A549 (cell line): ENCODE measurements at regions of chr3 and their contacts with region 1.

Region 1: DNA sequence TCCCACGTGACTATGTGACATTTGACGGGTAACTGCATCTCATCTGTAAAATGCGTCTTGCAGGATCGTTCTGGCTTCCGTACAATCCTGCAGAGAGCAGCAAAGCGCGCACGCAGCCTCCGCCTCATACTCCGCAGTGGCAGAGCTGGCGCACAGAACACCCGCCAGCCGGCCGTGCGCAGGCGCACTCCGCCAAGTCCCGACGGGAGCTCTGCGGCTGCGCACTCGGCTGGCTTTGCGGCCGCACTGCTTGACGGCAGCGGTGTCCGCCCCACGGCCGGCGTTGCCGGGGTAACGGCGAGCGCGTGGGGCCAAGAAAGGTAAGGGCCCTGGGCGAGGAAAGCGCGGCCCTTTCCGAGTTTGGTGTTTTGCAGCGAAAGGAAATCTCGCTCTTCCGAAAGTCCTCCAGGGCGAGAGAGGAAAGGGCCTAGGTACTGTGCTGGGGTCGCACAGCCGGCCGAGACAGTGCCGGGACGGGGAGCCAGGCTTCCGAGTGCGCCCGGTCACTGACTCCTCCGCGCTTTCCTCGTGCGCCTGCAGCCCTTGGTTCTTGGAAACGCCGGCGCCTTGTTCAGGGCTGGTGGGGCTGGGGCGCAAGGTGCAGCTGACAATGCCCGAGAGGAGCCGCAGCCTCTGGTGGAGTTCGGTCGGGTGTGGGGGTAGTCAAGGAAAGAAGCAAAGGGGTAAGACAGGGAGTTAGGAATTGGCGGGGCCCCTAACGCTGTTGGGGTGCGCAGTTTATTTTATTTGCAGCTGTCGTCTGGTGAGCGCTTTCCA is at the start of gene TSEN2:
- DNase-seq: peak; percentile 92 to 95
- ATAC-seq: peak; percentile 87 to 96
- H3K4me3 ChIP-seq: peak within 1 kb of the TSS; percentile 81
- H3K27ac ChIP-seq: peak within 1 kb of the TSS; percentile 88 to 93
- H3K4me1 ChIP-seq: peaks cover 25% of the 10 kb centered on the region
- CTCF ChIP-seq: no peak
- EP300 ChIP-seq: no peak
- POLR2A ChIP-seq: peak; percentile 95
- RAD21 ChIP-seq: peak in 1 of 2 experiments; percentile 22; a peak in 1 of 5 replicates
- polyA plus RNA-seq, gene TSEN2: 29.8 and 33.1 TPM in 2 replicates

Region 2: GRCh38 chr3:12175844-12176453 is 308.4 kb before region 1 on chr3:
- CTCF ChIA-PET with region 1: interaction called, 85 read pairs
- POLR2A ChIA-PET with region 1: interaction called, 3 read pairs
- DNase-seq: peak; percentile 58 to 60
- ATAC-seq: peak; percentile 96 to 98
- H3K4me3 ChIP-seq: no peak overlapping the region
- H3K27ac ChIP-seq: peak overlapping the region; percentile 33 to 51; a peak in 3 of 6 replicates
- H3K4me1 ChIP-seq: peaks cover 16% of the 10 kb centered on the region
- CTCF ChIP-seq: peak; percentile 85
- EP300 ChIP-seq: no peak
- POLR2A ChIP-seq: no peak
- RAD21 ChIP-seq: peak; percentile 94

Region 3: GRCh38 chr3:12224181-12225147 is 259.9 kb before region 1 on chr3:
- CTCF ChIA-PET with region 1: interaction called, 10 read pairs
- POLR2A ChIA-PET with region 1: no interaction called
- DNase-seq: peak in 1 of 2 experiments; percentile 3
- ATAC-seq: no peak
- H3K4me3 ChIP-seq: no peak overlapping the region
- H3K27ac ChIP-seq: 0 out of 6 replicates have a peak overlapping the region, but pooled peaks of 1 of the 2 experiments have one; percentile 30
- H3K4me1 ChIP-seq: peaks cover 23% of the 10 kb centered on the region
- CTCF ChIP-seq: no peak
- EP300 ChIP-seq: no peak
- POLR2A ChIP-seq: no peak
- RAD21 ChIP-seq: no peak

Region 4: DNA sequence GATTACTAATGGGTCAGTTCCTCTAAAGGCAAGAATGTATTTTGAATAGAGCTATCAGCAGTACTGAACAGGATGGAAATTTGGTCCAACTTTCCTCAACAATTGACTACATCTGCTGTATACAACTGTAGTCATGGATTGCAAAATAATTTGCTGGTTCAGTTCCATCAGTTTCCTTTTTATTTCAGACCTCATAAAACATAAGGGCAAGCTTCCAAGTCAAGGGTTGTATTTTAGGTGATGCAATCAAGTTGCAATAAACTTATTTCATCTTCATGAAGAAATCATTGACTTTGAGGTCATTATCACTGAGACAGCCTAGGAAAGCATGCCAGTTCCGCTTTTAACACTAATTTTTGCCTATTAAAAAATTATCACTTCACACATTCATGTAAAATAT is 90.5 kb before region 1 on chr3:
- CTCF ChIA-PET with region 1: interaction called, 13 read pairs
- POLR2A ChIA-PET with region 1: no interaction called
- DNase-seq: peak in 1 of 2 experiments; percentile 46
- ATAC-seq: peak in 1 of 2 experiments; percentile 24; a peak in 2 of 6 replicates
- H3K4me3 ChIP-seq: no peak overlapping the region
- H3K27ac ChIP-seq: peak overlapping the region; percentile 65 to 71; a peak in 5 of 6 replicates
- H3K4me1 ChIP-seq: peaks cover 27% of the 10 kb centered on the region
- CTCF ChIP-seq: no peak
- EP300 ChIP-seq: peak; percentile 68 to 76; a peak in 3 of 5 replicates
- POLR2A ChIP-seq: no peak
- RAD21 ChIP-seq: no peak; a peak in 1 of 5 replicates

Region 5: GRCh38 chr3:12465836-12466395 is 18.5 kb before region 1 on chr3:
- CTCF ChIA-PET with region 1: interaction called, 39 read pairs
- POLR2A ChIA-PET with region 1: interaction called, 4 read pairs
- DNase-seq: no peak
- ATAC-seq: no peak
- H3K4me3 ChIP-seq: no peak overlapping the region
- H3K27ac ChIP-seq: peak overlapping the region in 1 of 2 experiments; percentile 42; a peak in 1 of 6 replicates
- H3K4me1 ChIP-seq: peaks cover 12% of the 10 kb centered on the region
- CTCF ChIP-seq: no peak
- EP300 ChIP-seq: no peak
- POLR2A ChIP-seq: no peak
- RAD21 ChIP-seq: no peak

Region 6: GRCh38 chr3:12549971-12550760 is 65.8 kb after region 1 on chr3:
- CTCF ChIA-PET with region 1: no interaction called
- POLR2A ChIA-PET with region 1: no interaction called
- DNase-seq: no peak
- ATAC-seq: no peak
- H3K4me3 ChIP-seq: no peak overlapping the region
- H3K27ac ChIP-seq: no peak overlapping the region
- H3K4me1 ChIP-seq: no peaks in the 10 kb centered on the region
- CTCF ChIP-seq: no peak
- EP300 ChIP-seq: no peak
- POLR2A ChIP-seq: no peak
- RAD21 ChIP-seq: no peak

Region 7: GRCh38 chr3:12663936-12664908 is 179.8 kb after region 1 on chr3 and contains the start of gene RAF1:
- CTCF ChIA-PET with region 1: no interaction called
- POLR2A ChIA-PET with region 1: no interaction called
- DNase-seq: peak; percentile 92 to 98
- ATAC-seq: peak; percentile 90 to 96
- H3K4me3 ChIP-seq: peak within 1 kb of the TSS; percentile 85
- H3K27ac ChIP-seq: peak within 1 kb of the TSS; percentile 97 to 98
- H3K4me1 ChIP-seq: peaks cover 22% of the 10 kb centered on the region; the same call in 2 of the 3 replicates
- CTCF ChIP-seq: no peak
- EP300 ChIP-seq: no peak
- POLR2A ChIP-seq: peak; percentile 78
- RAD21 ChIP-seq: peak in 1 of 2 experiments; percentile 25; a peak in 1 of 5 replicates
- polyA plus RNA-seq, gene RAF1: 94.6 and 109 TPM in 2 replicates